ENCODE measurements at regions of chr12 and their contacts with region 1.

Region 1: DNA sequence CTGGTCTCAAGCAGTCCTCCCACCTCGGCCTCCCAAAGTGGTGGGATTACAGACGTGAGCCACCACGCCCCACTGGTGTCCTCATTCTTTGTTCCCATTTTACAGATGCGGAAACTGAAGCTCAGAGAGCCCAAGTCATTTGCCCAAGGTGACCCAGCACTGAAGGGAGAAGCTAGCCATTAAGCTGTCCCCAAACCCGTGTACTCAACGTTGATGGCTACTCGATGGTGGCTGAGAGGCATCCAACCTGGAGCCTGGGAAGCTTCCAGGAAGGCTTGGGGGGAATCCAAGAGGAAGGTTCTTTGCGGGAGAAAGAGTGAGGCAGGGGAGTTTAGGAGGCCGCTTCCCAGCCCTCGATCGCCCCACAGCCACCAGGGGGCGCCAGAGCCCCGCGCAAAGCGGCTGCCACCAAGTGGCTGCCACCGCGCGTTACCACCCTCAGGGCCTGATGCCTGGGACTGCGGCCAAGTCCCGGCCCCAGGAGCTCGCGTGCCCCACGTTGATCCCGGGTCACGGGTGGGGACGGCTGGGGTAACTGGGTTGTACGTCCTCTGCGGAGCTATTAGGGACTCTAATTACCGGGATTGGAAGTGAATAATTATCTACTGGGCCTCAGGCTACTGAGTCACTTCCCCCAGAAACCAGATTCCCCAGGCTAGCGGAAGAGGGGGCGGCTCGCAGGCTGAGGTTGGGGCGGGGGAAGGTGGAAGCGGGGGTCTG is 8.8 kb upstream of the SH2B3 start:
- DNase-seq: peak; percentile 71 to 97
- H3K4me3 ChIP-seq: no peak overlapping the region
- CTCF ChIP-seq: peak in 1 of 3 donors; percentile 97
- POLR2A ChIP-seq: no peak

Region 2: GRCh38 chr12:111462210-111462769 is 65.4 kb after region 1 on chr12:
- intact Hi-C with region 1: no loop called
- DNase-seq: no peak
- H3K4me3 ChIP-seq: no peak overlapping the region
- CTCF ChIP-seq: no peak
- POLR2A ChIP-seq: no peak

Region 3: GRCh38 chr12:111519083-111519482 is 122.2 kb after region 1 on chr12:
- intact Hi-C with region 1: loop called (anchors 10 kb)
- DNase-seq: no peak
- H3K4me3 ChIP-seq: no peak overlapping the region
- CTCF ChIP-seq: no peak
- POLR2A ChIP-seq: no peak

Measured in lower leg skin (tissue), 4 donors.